Panc1 (cell line): ENCODE measurements at regions of chr3 and their contacts with region 1.

Region 1: GRCh38 chr3:28989646-28990089 is 291.2 kb upstream of the RBMS3 start:
- DNase-seq: no peak
- ATAC-seq: no peak
- H3K4me3 ChIP-seq: no peak overlapping the region
- H3K27ac ChIP-seq: no peak overlapping the region
- H3K4me1 ChIP-seq: no peaks in the 10 kb centered on the region
- H3K27me3 ChIP-seq: no peaks in the 10 kb centered on the region
- CTCF ChIP-seq: no peak

Region 2: DNA sequence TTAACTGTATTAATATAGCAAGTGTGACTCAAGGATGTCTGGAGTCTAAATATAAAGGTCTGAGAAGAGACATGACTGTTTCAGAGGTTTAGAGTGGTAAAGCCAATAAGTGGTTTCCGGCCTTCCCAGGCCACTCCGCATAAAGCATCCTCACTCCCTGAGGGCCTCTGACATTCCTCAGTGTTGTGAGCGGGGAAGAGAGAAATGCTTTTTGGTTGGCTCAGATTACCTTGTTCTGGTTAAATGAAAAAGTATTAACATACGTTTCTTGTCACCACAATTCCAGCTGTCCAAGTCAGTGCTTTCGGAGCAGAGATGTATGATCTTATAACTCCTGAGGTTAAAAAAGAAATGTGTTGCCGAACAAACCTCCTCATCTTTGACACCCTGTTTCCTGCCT is 395.0 kb after region 1 on chr3:
- CTCF ChIA-PET with region 1: no interaction called
- POLR2A ChIA-PET with region 1: no interaction called
- in situ Hi-C with region 1: no loop called
- intact Hi-C with region 1: no loop called
- DNase-seq: no peak
- ATAC-seq: no peak
- H3K4me3 ChIP-seq: no peak overlapping the region
- H3K27ac ChIP-seq: no peak overlapping the region
- H3K4me1 ChIP-seq: no peaks in the 10 kb centered on the region
- H3K27me3 ChIP-seq: no peaks in the 10 kb centered on the region
- CTCF ChIP-seq: no peak

Region 3: DNA sequence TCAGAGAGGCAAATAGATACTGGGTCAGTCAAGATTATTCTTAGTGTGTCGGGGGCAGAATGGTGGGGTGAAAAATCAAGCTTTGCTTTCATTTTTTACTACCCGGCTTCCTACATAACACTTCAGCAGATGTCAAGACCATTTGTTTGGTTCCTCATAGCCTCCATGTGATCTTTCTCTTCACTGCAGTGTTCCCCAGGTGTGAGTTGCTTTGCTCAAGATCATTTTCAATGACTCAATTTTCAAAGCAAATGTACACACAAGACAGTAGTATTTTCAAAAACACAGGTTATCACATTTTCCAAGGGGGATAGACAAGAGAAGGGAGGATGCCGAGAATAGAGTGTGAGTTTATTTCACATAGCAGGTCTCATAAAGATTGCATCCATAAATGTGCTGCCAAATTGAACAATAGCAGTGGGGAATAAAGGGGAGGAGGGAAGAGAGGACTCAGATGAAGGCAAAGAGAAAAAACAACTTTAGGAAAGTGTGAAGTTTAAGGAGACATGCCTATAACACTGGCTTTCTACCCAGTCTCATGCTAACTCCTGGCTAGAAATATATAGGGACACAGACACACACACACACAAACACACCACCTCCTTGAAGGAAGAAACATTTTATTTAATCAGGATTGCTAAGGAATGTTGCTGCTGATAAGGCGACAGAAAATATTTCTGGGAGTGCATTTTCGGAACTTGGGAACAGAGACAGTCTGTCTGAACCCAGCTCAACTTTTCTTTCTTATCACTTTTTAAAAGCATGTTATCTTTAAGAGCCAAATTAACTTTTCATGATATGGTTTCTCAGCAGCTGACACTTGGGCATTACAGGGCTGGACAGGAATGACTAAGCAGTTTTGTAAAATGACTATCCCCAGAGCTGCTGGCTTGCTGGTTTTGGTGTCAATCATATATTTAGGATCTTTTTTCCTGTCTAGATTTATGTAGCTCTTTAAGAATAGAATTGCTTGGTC is 693.6 kb after region 1 on chr3:
- CTCF ChIA-PET with region 1: no interaction called
- POLR2A ChIA-PET with region 1: interaction called, 10 read pairs
- in situ Hi-C with region 1: no loop called
- intact Hi-C with region 1: no loop called
- DNase-seq: no peak
- ATAC-seq: peak; percentile 17; the same call in 1 of the 2 replicates
- H3K4me3 ChIP-seq: no peak overlapping the region
- H3K27ac ChIP-seq: peak overlapping the region; percentile 48; the same call in 1 of the 2 replicates
- H3K4me1 ChIP-seq: no peaks in the 10 kb centered on the region
- H3K27me3 ChIP-seq: no peaks in the 10 kb centered on the region
- CTCF ChIP-seq: no peak